ENCODE measurements at regions of chr5 and their contacts with region 1.

Region 1: DNA sequence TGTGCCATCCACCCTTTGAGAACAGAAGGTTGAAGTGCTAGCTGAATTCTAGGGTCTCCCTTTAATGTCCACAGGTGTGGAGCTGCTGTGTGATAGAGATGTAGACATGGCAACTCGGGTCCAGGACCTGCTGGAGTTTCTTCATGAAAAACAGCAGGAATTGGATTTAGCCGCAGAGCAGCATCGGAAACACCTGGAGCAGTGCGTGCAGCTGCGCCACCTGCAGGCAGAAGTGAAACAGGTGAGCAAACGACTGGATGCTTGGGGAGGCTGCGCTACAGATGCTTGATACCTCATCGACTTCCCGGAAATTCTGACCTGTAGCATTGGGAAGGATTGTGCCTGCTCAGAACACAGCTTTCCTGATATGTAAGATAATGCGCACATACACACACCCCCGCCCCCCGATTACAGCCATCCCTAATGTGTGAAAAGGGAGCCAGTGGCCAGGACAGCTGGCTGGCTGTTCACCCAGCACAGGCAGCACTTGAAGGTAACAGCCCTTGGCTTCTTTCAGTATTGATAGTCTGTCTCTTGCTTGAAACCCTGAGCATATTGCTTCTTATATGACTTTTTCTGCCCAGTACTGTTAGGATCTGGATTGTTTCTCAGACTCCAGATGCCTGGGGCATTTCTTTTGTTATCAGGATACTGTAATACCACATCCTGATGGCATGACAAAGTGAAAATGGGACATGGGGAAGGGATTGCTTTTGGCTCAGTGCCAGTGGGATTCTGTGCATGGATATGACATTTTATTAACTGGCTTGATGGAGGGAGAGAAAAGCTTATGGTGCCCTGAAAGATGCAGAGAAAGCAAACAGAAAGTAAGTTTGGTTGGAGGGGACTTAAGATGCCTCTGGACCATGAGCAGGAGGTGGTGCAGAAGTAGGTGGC is 216.8 kb upstream of the OTULINL start:
- DNase-seq: no peak
- H3K4me3 Mint-ChIP-seq: no peak overlapping the region
- H3K27ac Mint-ChIP-seq: peak overlapping the region; percentile 89
- H3K4me1 Mint-ChIP-seq: peaks cover 58% of the 10 kb centered on the region
- H3K27me3 Mint-ChIP-seq: peaks cover 9% of the 10 kb centered on the region

Region 2: GRCh38 chr5:14351845-14352712 is 12.7 kb before region 1 on chr5:
- CTCF ChIA-PET with region 1: interaction called, 12 read pairs
- DNase-seq: peak; percentile 74
- H3K4me3 Mint-ChIP-seq: no peak overlapping the region
- H3K27ac Mint-ChIP-seq: no peak overlapping the region
- H3K4me1 Mint-ChIP-seq: peaks cover 6% of the 10 kb centered on the region
- H3K27me3 Mint-ChIP-seq: peaks cover 19% of the 10 kb centered on the region

Region 3: GRCh38 chr5:14399054-14399692 is 34.3 kb after region 1 on chr5:
- CTCF ChIA-PET with region 1: interaction called, 26 read pairs
- DNase-seq: peak; percentile 44
- H3K4me3 Mint-ChIP-seq: no peak overlapping the region
- H3K27ac Mint-ChIP-seq: no peak overlapping the region
- H3K4me1 Mint-ChIP-seq: peaks cover 59% of the 10 kb centered on the region
- H3K27me3 Mint-ChIP-seq: peaks cover 8% of the 10 kb centered on the region

Region 4: DNA sequence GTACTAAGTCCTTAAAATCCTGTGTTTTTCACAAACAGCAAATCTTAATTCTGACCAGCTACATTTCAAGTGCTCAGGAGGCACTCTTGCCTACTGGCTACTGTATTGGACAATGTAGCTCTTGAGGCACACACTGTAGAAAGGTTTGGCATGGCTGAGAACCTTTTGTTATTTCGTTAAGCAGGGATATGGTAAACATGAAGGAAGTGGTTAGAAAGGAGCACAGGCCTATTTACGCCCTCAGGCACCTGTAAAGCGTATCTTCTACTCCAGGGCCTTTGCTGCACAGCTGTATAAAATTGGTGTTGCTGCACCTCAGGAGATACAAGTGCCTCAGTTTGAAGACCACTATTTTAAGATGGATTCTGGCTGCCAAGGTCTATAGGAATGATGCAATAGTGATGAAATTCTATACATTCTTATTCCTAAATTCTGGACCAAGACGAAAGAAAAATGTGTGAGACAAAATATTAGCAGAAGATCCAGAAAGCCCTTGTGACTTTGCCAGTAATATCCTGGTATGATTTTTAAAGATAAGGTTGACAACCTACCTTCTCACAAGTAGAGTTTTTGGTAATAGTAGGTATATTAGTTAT is 290.4 kb after region 1 on chr5:
- CTCF ChIA-PET with region 1: interaction called, 240 read pairs
- DNase-seq: peak; percentile 29
- H3K4me3 Mint-ChIP-seq: no peak overlapping the region
- H3K27ac Mint-ChIP-seq: no peak overlapping the region
- H3K4me1 Mint-ChIP-seq: peaks cover 19% of the 10 kb centered on the region
- H3K27me3 Mint-ChIP-seq: peaks cover 17% of the 10 kb centered on the region

Measured in activated naive CD4-positive, alpha-beta T cell treated with anti-CD3 and anti-CD28 coated beads, Interleukin-2, amount 10 ng/mL, durations not matched to agents 7 days and 5 days (primary cell).